ENCODE measurements at regions of chr3 and their contacts with region 1.

Region 1: DNA sequence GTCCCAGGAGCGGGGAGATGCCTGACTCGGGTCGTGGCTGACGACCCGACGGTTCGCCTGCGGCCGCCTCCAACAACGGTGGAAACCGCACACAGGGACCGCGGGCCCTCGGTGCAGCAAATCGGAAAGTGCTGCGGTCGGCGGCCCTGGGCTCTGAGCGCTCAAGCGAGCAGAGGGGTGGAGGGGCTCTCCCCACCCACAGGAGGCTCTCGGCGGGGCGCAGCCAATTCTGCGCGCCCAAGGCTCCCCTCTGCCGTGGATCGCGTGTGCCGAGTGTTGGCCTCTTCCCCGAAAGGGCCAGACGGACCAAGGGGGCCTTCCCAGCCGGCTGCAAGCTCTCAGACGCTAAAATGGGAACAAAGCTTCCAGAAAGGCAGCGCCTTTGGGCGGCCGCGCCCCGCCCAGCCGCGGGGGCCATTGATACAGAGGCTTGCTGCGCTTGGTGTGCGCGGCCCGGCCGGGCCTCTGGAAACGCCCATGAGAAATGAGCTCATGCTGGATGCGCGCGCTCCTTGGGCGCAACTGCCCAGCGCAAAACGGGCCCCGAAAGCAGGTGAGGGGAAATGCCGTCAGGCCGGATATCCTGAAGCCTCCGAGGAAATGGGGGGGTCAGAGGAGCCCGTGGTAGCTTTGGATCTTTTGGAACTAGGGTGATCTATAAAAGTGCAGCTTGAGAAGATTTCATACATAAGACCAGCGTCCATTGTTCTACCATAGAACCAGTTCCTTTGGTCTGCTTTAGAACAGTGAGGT is 1.2 kb upstream of the GSK3B start:
- DNase-seq: peak; percentile 60 to 90 (median 81)
- H3K4me3 ChIP-seq: peak overlapping the region; percentile 61 to 99 (median 90)
- H3K27ac ChIP-seq: peak overlapping the region; percentile 81 to 100 (median 99)
- H3K27me3 ChIP-seq: no peaks in the 10 kb centered on the region
- CTCF ChIP-seq: peak in 6 of 56 donors; percentile 7 to 32 (median 14)

Region 2: DNA sequence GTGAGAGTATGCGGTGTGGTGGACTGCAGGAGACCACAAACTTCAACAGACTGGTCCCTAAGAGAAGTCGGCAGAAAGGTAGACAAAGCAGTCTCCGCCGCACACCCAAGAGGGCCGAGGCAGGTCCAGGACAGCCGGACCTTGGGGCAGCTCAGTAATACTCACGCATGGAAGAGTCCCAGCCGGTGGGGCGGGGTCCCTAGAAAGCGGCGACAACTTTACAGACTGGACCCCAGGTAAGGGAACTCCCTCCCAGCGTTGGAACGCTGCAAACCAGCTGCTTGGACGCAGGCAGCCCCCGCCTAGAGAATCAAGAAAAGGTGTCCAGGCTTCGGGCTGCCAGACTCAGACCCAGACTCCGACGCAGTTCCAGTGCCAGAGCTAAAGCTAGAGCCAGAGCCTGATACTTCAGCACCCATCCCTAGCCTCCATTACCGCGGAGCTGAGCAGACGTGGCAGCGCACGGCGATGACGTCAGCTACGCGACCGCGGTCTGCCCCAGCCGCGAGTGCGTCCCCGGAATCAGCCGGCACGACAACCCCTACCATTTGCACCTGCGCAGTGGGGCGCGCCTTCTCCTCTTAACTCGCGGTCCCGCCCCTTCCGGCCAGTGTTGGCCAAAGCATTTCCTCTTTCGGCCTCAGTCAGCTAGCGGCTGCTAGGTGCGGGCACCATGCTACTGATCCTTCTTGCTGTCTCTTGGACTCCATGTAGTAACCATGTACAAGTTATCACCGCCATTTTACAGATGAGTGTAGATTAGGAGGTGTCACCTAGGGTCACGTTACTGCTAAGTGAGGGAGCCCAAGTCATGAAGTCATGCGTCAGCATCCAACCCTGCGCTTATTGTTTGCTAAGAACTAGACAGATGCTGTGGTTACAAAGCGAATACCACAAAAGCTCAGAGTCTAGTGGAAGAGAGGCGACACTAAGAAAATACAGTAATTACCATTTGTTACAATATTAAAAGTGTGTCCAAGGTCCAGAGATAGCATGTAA is 631.9 kb before region 1 on chr3 and contains the start of gene TMEM39A:
- intact Hi-C with region 1: loop called in 1 of 2 experiments (anchors 5 kb)
- DNase-seq: peak; percentile 98 to 100 (median 99)
- H3K4me3 ChIP-seq: peak within 1 kb of the TSS; percentile 74 to 100 (median 96)
- H3K27ac ChIP-seq: peak within 1 kb of the TSS; percentile 27 to 94 (median 88)
- H3K27me3 ChIP-seq: no peaks in the 10 kb centered on the region
- CTCF ChIP-seq: peak in 53 of 56 donors; percentile 4 to 64 (median 40)
- total RNA-seq, gene TMEM39A: 8.7 to 30.1 (median 18.3) TPM

Region 3: GRCh38 chr3:119891944-119892721 is 203.3 kb before region 1 on chr3:
- intact Hi-C with region 1: loop called (anchors 5 to 10 kb)
- DNase-seq: peak in 1 of 10 donors; percentile 16
- H3K4me3 ChIP-seq: peak overlapping the region in 19 of 59 donors; percentile 6 to 47 (median 25)
- H3K27ac ChIP-seq: no peak overlapping the region
- H3K27me3 ChIP-seq: no peaks in the 10 kb centered on the region
- CTCF ChIP-seq: peak; percentile 28 to 94 (median 75)

Region 4: DNA sequence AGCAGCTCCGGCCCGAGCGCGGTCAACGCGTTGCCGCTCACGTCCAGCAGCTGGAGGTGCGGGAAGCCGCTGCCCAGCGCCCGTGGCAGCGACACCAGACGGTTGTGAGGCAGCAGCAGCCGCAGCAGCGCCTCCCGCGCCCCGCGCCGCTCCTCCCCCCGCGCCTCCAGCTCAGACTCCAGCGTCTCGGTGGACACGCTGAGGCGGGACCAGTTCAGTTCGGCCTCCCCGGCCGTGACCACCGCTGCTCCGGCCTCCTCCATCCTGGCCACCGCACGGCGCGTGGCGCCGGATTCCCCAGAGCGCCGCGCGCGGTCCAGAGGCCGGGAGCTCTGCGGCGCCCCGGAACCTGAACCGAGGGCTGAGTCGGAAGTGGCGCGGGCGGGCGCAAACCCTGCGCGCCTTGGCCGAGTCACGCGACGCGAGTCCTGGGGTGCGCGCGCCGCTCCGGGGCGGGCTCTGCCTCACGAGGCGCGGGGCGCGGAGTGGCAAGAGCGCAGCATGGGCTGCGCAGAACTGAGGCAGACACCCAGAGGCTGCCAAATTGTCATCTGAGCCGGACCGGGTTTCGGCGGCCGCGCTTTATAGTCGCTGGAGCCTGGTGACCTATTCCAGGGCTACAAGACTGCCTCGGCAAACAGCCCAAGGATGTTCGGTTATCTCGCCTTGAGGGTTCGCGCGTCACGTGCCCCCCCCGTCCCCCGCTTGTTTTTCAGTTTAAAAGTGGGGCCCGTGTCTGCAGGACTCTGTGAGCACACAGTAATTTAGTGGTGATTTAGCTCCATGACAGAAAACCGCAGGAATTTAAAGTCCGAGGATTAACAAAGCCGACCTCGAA is 253.8 kb after region 1 on chr3 and contains the start of gene LRRC58:
- intact Hi-C with region 1: loop called (anchors 2 kb)
- DNase-seq: peak; percentile 71 to 89 (median 82)
- H3K4me3 ChIP-seq: peak within 1 kb of the TSS; percentile 64 to 99 (median 90)
- H3K27ac ChIP-seq: peak within 1 kb of the TSS; percentile 65 to 99 (median 96)
- H3K27me3 ChIP-seq: no peaks in the 10 kb centered on the region
- CTCF ChIP-seq: peak in 51 of 56 donors; percentile 4 to 70 (median 46)
- total RNA-seq, gene LRRC58: 15.6 to 29.6 (median 20.9) TPM

Region 5: DNA sequence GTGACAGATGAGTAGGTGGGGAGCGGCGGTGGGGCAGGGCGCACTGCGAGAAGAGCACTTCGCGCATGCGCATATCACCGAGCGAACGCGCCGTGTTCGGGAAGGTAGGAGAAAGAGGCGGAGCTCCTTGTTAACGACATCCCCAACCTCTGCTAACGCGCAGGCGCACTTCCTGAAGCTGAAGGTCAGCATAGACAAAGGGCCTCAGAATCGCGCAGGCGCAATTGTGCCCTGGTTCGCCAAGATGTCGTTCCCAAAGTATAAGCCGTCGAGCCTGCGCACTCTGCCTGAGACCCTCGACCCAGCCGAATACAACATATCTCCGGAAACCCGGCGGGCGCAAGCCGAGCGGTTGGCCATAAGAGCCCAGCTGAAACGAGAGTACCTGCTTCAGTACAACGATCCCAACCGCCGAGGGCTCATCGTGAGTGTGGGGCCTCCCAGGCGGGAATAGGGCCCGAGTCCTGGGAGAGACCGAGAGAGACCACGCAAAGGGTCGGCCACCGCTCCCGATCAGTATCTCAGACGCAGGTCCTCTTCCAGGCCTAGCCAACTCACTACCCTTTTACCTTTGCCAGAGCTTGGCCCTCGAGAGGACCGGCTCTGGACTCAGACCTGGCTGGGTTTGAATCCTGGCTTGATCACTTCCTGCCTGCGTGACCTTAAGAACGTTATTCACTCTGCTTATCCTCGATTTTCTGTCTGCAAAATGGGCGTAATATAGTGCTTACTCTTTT is 500.9 kb after region 1 on chr3 and contains the start of gene NDUFB4:
- intact Hi-C with region 1: loop called in 1 of 2 experiments (anchors 10 kb)
- DNase-seq: peak; percentile 94 to 98 (median 96)
- H3K4me3 ChIP-seq: peak within 1 kb of the TSS; percentile 61 to 100 (median 91)
- H3K27ac ChIP-seq: peak within 1 kb of the TSS; percentile 70 to 97 (median 93)
- H3K27me3 ChIP-seq: no peaks in the 10 kb centered on the region
- CTCF ChIP-seq: peak in 22 of 56 donors; percentile 8 to 53 (median 24)
- total RNA-seq, gene NDUFB4: 75.5 to 170 (median 127) TPM

Region 6: GRCh38 chr3:120742198-120742849 is 646.9 kb after region 1 on chr3 and contains the starts of genes GTF2E1 and RABL3:
- intact Hi-C with region 1: loop called in 1 of 2 experiments (anchors 5 kb)
- DNase-seq: peak; percentile 96 to 100 (median 99)
- H3K4me3 ChIP-seq: peak within 1 kb of the TSS; percentile 70 to 99 (median 91)
- H3K27ac ChIP-seq: peak within 1 kb of the TSS; percentile 82 to 100 (median 97)
- H3K27me3 ChIP-seq: no peaks in the 10 kb centered on the region
- CTCF ChIP-seq: peak in 16 of 56 donors; percentile 4 to 41 (median 18)
- total RNA-seq, gene GTF2E1: 6.9 to 20.8 (median 13.6) TPM
- total RNA-seq, gene RABL3: 14.9 to 33.8 (median 25.1) TPM